Activated CD4-positive, alpha-beta memory T cell treated with anti-CD3 and anti-CD28 coated beads, Interleukin-2, amount 10 ng/mL, durations not matched to agents 7 days and 5 days (primary cell): ENCODE measurements at regions of chrX and their contacts with region 1.

Region 1: DNA sequence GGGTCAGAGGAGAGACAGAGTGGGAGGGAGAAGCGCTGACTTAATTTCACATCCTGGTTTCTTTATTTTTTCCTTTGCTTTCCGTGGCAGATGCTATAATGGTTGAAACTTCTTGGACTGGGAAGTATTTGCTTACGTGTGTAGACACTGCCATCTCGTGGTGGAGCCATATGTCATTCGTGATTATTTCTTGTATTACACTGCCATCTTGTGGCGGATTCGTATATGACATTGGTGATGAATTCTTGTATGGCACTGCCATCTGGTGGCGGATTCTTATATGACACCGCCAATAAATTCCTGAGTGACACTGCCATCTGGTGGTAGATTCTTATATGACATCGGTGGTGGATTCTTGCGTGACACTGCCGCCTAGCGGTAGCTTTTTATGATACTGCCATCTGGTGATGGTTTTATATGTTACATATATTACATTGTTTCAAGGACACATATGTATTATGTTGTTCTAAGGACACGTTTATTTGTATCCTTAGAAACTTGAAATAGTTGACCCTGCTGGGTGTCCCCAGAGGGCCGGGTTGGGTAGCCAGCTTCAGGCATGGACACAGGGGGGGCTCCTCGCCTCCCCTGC is 37.3 kb upstream of the CLCN4 start:
- DNase-seq: peak; percentile 74
- H3K4me3 Mint-ChIP-seq: no peak overlapping the region
- H3K27ac Mint-ChIP-seq: no peak overlapping the region
- H3K4me1 Mint-ChIP-seq: peaks cover 5% of the 10 kb centered on the region
- H3K27me3 Mint-ChIP-seq: no peaks in the 10 kb centered on the region

Region 2: DNA sequence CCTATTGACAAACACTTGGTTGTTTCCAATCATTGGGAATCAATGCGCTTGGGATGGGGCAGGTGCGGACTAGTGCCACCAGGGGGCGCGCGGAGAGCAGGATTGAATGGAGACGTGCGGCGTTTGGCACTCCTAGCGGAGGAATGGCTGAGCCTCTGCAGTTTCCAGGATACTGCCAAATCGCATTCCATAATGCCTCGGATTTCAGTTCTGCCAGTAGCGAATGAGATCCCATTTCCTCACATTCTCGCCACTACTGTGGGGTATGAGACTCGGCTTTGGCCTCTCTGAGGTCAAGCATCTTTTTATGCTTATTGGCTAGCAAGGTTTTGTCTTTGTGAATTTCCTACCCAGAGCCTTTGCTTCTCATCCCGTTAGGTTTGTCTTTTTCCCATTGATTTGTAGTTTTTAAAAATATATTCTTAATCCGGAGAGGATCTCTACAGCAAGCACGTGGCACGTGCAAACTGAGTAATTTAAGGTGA is 123.6 kb before region 1 on chrX:
- CTCF ChIA-PET with region 1: interaction called, 32 read pairs
- POLR2A ChIA-PET with region 1: no interaction called
- DNase-seq: peak; percentile 74
- H3K4me3 Mint-ChIP-seq: no peak overlapping the region
- H3K27ac Mint-ChIP-seq: no peak overlapping the region
- H3K4me1 Mint-ChIP-seq: peaks cover 6% of the 10 kb centered on the region
- H3K27me3 Mint-ChIP-seq: peaks cover 1% of the 10 kb centered on the region

Region 3: GRCh38 chrX:10001496-10001895 is 118.0 kb before region 1 on chrX:
- CTCF ChIA-PET with region 1: interaction called, 32 read pairs
- POLR2A ChIA-PET with region 1: no interaction called
- DNase-seq: no peak
- H3K4me3 Mint-ChIP-seq: no peak overlapping the region
- H3K27ac Mint-ChIP-seq: no peak overlapping the region
- H3K4me1 Mint-ChIP-seq: peaks cover 26% of the 10 kb centered on the region
- H3K27me3 Mint-ChIP-seq: no peaks in the 10 kb centered on the region

Region 4: DNA sequence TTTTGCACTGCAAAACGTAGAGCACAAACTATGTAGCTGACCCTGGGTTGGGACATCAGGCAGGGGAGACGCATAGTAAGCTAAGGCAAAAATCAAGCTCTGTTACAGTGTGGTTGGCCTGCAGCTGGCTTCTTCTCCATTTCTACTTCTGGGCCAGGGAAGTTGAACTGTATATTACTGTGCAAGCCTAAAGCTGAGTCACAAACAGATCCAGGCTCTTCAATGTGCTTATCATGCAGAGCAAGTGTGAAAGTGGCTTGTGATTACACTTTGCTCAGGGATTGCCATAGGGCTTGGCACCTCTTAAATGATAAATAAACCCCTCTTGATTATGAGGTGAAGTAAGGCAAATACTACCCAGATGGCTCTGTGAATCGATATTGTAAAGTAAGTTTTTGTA is 111.9 kb before region 1 on chrX:
- CTCF ChIA-PET with region 1: interaction called, 12 read pairs
- POLR2A ChIA-PET with region 1: no interaction called
- DNase-seq: no peak
- H3K4me3 Mint-ChIP-seq: no peak overlapping the region
- H3K27ac Mint-ChIP-seq: no peak overlapping the region
- H3K4me1 Mint-ChIP-seq: peaks cover 37% of the 10 kb centered on the region
- H3K27me3 Mint-ChIP-seq: peaks cover under 1% of the 10 kb centered on the region